Heart right ventricle (tissue), 16 donors: ENCODE measurements at regions of chr3 and their contacts with region 1.

Region 1: DNA sequence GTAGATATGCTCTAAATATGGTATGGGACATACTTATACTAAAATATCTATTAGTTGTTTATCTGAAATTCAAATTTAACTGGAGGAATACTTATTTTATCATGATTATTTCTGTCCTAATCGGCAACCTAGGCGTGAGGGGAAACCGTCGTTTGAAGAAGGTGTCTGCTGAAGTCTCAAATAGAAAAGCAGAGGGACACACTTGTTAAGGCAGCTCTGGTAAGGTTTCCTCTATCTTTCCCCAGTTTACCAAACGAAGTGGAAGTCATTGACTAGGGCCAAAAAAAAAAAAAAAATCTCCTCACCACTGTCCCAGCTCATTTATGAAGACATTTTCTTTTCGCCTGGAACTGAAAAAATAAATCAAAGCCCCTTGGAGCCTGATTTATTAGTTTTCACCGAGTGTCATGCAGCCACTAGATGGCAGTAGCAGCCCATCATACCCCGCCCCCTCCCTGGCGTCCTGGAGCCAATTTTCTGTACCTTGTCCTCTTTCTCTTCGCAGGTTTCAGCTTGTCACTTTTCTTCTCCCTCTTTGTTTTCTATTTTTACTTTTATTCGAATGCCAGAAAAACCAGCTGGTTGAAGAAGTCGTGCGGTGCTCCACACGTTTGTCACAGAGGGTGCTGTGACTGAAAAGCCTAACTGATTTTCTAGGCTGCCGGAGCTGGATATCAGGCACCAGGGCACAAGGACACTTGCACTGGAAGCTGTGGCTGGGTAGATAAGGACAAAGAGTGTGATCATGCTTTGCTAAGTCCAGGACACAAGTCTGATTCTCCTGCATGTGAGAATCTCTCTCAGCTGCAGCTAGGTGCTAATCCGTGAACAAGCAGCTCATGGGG is 238.7 kb downstream of the ZPLD1 start:
- DNase-seq: peak; percentile 50 to 56
- ATAC-seq: peak; percentile 80 to 97 (median 92)
- H3K4me3 ChIP-seq: peak overlapping the region in 3 of 10 donors; percentile 8 to 25 (median 13)
- H3K27ac ChIP-seq: peak overlapping the region in 3 of 10 donors; percentile 7 to 36 (median 23)
- H3K4me1 ChIP-seq: peaks cover 0 to 13% (median 0%) of the 10 kb centered on the region in 9 donors
- H3K27me3 ChIP-seq: peaks cover 0 to 6% (median 2%) of the 10 kb centered on the region in 7 donors
- CTCF ChIP-seq: peak; percentile 57 to 84 (median 78)

Region 2: GRCh38 chr3:102699819-102700140 is 26.3 kb after region 1 on chr3:
- intact Hi-C with region 1: loop called in 1 of 10 experiments (anchors 1 kb)
- DNase-seq: peak in 1 of 2 donors; percentile 26
- ATAC-seq: peak in 6 of 8 donors; percentile 77 to 96 (median 94)
- H3K4me3 ChIP-seq: no peak overlapping the region
- H3K27ac ChIP-seq: peak overlapping the region in 8 of 10 donors; percentile 44 to 80 (median 69)
- H3K4me1 ChIP-seq: peaks cover 0 to 12% (median 0%) of the 10 kb centered on the region in 9 donors
- H3K27me3 ChIP-seq: no peaks in the 10 kb centered on the region
- CTCF ChIP-seq: no peak

Region 3: GRCh38 chr3:102733791-102734574 is 60.5 kb after region 1 on chr3:
- intact Hi-C with region 1: loop called in 1 of 10 experiments (anchors 10 kb)
- DNase-seq: no peak
- ATAC-seq: no peak
- H3K4me3 ChIP-seq: no peak overlapping the region
- H3K27ac ChIP-seq: no peak overlapping the region
- H3K4me1 ChIP-seq: peaks cover 0 to 18% (median 3%) of the 10 kb centered on the region in 9 donors
- H3K27me3 ChIP-seq: no peaks in the 10 kb centered on the region
- CTCF ChIP-seq: no peak

Region 4: GRCh38 chr3:102741108-102741507 is 67.6 kb after region 1 on chr3:
- intact Hi-C with region 1: loop called in 4 of 10 experiments (anchors 2 to 10 kb)
- DNase-seq: no peak
- ATAC-seq: peak in 4 of 8 donors; percentile 23 to 59 (median 32)
- H3K4me3 ChIP-seq: no peak overlapping the region
- H3K27ac ChIP-seq: no peak overlapping the region
- H3K4me1 ChIP-seq: peaks cover 0 to 5% (median 0%) of the 10 kb centered on the region in 9 donors
- H3K27me3 ChIP-seq: no peaks in the 10 kb centered on the region
- CTCF ChIP-seq: peak in 5 of 9 donors; percentile 12 to 36 (median 17)